Heart left ventricle (tissue), 16 donors: ENCODE measurements at regions of chr2 and their contacts with region 1.

Region 1: GRCh38 chr2:109510136-109511028 is 103.4 kb downstream of the SEPTIN10 start:
- DNase-seq: peak; percentile 67 to 84 (median 78)
- ATAC-seq: peak; percentile 27 to 72 (median 65)
- H3K4me3 ChIP-seq: no peak overlapping the region
- H3K27ac ChIP-seq: no peak overlapping the region
- H3K4me1 ChIP-seq: peaks cover 0 to 12% (median 2%) of the 10 kb centered on the region in 12 donors
- H3K27me3 ChIP-seq: no peaks in the 10 kb centered on the region
- CTCF ChIP-seq: peak; percentile 85 to 96 (median 92)
- POLR2A ChIP-seq: no peak

Region 2: GRCh38 chr2:108927936-108928659 is 582.3 kb before region 1 on chr2:
- intact Hi-C with region 1: loop called in 3 of 10 experiments (anchors 10 kb)
- DNase-seq: no peak
- ATAC-seq: peak; percentile 23 to 67 (median 36)
- H3K4me3 ChIP-seq: no peak overlapping the region
- H3K27ac ChIP-seq: no peak overlapping the region
- H3K4me1 ChIP-seq: peaks cover 0 to 11% (median under 1%) of the 10 kb centered on the region in 12 donors
- H3K27me3 ChIP-seq: peaks cover 0 to 4% (median 0%) of the 10 kb centered on the region in 9 donors
- CTCF ChIP-seq: peak; percentile 53 to 73 (median 64)
- POLR2A ChIP-seq: no peak

Region 3: DNA sequence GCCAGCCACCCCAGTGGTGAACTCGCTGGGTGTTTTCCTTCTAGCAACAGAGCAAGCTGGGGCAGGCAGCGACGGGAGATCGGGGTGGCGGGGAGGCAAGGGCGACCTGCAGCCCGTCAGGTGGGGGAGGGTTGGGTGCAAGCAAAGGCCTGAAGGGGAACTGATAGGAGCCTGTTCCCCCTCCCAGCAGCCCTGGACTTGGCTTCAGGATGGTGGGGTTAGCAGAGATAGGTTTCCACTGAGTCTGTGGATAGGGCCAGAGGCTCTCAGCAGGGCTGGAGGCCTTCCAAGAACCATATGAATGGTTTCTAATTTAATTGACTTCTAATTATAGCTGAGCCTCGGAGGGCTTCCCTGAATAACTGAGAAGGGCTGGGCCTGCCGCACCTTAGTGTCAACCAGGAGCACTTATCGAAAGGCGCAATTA is 576.7 kb before region 1 on chr2:
- intact Hi-C with region 1: loop called in 3 of 10 experiments (anchors 10 kb)
- DNase-seq: peak in 4 of 5 donors; percentile 41 to 79 (median 54)
- ATAC-seq: peak; percentile 48 to 87 (median 71)
- H3K4me3 ChIP-seq: no peak overlapping the region
- H3K27ac ChIP-seq: peak overlapping the region in 3 of 12 donors; percentile 14 to 38 (median 26)
- H3K4me1 ChIP-seq: peaks cover 0 to 44% (median 5%) of the 10 kb centered on the region in 12 donors
- H3K27me3 ChIP-seq: peaks cover 0 to 4% (median 0%) of the 10 kb centered on the region in 9 donors
- CTCF ChIP-seq: no peak
- POLR2A ChIP-seq: no peak